ENCODE measurements at regions of chr17 and their contacts with region 1.

Region 1: DNA sequence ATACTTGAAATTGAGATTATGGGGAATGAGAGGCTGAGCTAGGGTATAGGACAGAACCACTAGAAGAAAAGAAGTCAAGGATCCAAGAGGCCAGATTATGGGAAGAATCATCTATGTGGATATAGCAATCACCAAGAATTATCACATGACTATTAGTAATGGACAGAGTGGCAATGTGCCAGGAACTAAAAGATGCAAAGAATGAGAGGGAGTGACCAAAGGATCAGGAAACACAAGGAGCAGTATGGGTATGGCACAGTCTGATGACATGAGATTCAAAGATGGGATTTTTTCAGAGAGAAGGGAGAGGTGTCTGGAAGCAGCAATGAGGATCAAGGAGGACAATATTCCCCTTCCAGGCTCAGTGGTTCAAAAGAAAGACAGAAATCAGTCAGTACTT is 212.2 kb downstream of the AATF start:
- DNase-seq: no peak
- ATAC-seq: no peak
- H3K4me3 ChIP-seq: no peak overlapping the region
- H3K27ac ChIP-seq: no peak overlapping the region
- H3K4me1 ChIP-seq: no peaks in the 10 kb centered on the region
- H3K27me3 ChIP-seq: no peaks in the 10 kb centered on the region

Region 2: GRCh38 chr17:36824678-36825091 is 336.3 kb before region 1 on chr17:
- intact Hi-C with region 1: no loop called
- DNase-seq: no peak
- ATAC-seq: no peak
- H3K4me3 ChIP-seq: no peak overlapping the region
- H3K27ac ChIP-seq: no peak overlapping the region
- H3K4me1 ChIP-seq: no peaks in the 10 kb centered on the region
- H3K27me3 ChIP-seq: no peaks in the 10 kb centered on the region

Region 3: DNA sequence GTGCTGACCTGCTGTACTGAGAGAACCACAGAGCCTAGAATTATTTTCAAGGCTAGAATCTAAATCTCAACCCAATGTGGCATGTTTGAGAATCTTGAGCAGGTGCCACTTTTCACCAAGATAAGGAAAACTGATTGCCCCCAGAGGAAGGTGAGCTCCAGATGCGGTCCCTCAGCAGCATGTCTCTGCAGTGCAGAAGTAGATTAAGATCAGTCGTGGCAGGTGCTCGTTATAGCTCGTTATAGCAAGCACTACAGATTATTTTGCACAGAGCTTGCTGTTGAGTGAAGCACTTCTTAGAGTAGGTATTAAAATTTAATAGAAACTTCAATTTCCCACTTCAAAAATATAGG is 36.1 kb before region 1 on chr17:
- intact Hi-C with region 1: loop called in 1 of 2 experiments (anchors 5 kb)
- DNase-seq: no peak
- ATAC-seq: no peak
- H3K4me3 ChIP-seq: no peak overlapping the region
- H3K27ac ChIP-seq: no peak overlapping the region
- H3K4me1 ChIP-seq: no peaks in the 10 kb centered on the region
- H3K27me3 ChIP-seq: no peaks in the 10 kb centered on the region

Measured in aorta (tissue), 5 donors.